ENCODE measurements at regions of chr9 and their contacts with region 1.

Region 1: DNA sequence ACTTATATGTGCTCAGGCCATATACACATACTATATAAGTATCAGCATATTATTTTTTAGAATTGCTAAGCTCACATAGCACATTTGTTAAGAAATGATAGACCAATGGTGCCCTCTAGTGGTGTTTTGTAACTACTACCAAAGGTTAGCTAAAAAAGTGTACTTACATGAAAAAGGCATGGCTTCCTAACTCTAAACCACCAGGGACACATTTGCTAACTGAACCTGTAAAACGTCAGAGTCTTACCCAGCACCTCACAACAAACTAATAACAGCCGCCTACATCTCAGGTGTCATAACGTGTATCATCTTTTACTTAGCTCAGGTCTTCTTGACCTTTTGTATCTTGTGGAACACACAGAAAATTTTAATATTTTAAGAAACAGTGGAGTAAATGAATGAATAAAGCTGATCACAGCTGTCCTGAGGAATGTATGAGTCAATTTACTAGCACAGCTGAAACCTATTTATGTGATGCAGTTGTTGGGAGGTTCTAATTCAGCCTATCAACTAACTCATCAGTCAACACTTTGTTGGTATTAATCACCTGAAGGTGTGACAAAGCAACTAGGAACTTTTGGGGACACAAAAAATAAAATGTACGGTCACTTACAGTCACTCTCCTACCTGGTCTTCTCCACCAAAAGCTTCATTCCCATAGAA is 72.9 kb downstream of the BAAT start:
- DNase-seq: no peak
- H3K4me3 ChIP-seq: no peak overlapping the region
- H3K27ac ChIP-seq: peak overlapping the region in 30 of 59 donors; percentile 0 to 75 (median 40)
- H3K27me3 ChIP-seq: no peaks in the 10 kb centered on the region
- CTCF ChIP-seq: peak; percentile 70 to 97 (median 84)

Region 2: GRCh38 chr9:100714372-100715099 is 597.4 kb before region 1 on chr9:
- intact Hi-C with region 1: loop called (anchors 5 kb)
- DNase-seq: peak; percentile 58 to 86 (median 80)
- H3K4me3 ChIP-seq: peak overlapping the region; percentile 13 to 76 (median 53)
- H3K27ac ChIP-seq: peak overlapping the region in 14 of 59 donors; percentile 1 to 63 (median 27)
- H3K27me3 ChIP-seq: peaks cover 0 to 5% (median 0%) of the 10 kb centered on the region in 45 donors
- CTCF ChIP-seq: peak; percentile 79 to 99 (median 95)

Region 3: GRCh38 chr9:101028346-101029314 is 283.3 kb before region 1 on chr9 and contains the start of gene PLPPR1:
- intact Hi-C with region 1: loop called (anchors 10 kb)
- DNase-seq: peak; percentile 72 to 89 (median 84)
- H3K4me3 ChIP-seq: peak within 1 kb of the TSS; percentile 54 to 91 (median 77)
- H3K27ac ChIP-seq: peak within 1 kb of the TSS in 58 of 59 donors; percentile 48 to 94 (median 85)
- H3K27me3 ChIP-seq: peaks cover 0 to 19% (median 0%) of the 10 kb centered on the region in 45 donors
- CTCF ChIP-seq: peak in 13 of 56 donors; percentile 4 to 24 (median 17)
- total RNA-seq, gene PLPPR1: 3.8 to 68.1 (median 17.9) TPM

Region 4: DNA sequence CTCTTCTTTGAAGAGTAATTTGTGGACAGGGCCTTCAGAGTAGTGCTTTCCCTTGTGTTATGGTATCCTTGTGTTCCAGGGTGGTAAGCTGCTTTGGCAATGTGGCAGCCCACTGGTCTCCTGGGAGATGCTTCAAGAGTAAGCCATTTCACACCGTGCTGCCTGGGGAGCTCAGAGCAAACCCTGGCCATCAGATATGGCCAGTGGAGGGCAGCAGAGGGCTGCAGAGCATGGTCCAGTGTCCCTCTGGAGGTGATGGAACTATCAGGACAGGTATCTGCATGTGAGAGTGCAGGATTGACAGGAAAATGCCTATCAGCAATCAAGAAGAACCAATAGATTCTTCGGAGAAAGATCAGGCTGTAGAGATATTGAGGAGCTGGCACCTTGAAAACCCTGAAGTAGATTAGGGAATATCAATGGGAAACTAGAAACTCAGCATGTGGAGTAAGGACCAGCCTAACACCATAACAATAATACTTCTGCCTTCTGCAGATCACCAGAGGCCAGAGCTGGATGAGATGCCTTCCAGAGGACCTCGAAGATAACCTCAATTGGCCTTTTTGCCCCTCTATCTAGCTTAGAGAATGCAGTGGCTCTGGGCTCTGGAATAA is 192.6 kb before region 1 on chr9:
- intact Hi-C with region 1: loop called (anchors 5 kb)
- DNase-seq: peak; percentile 43 to 83 (median 70)
- H3K4me3 ChIP-seq: no peak overlapping the region
- H3K27ac ChIP-seq: peak overlapping the region in 35 of 59 donors; percentile 6 to 77 (median 33)
- H3K27me3 ChIP-seq: no peaks in the 10 kb centered on the region
- CTCF ChIP-seq: peak; percentile 59 to 96 (median 86)

Region 5: GRCh38 chr9:101235105-101235866 is 76.6 kb before region 1 on chr9:
- intact Hi-C with region 1: loop called (anchors 2 to 5 kb)
- DNase-seq: no peak
- H3K4me3 ChIP-seq: peak overlapping the region in 31 of 59 donors; percentile 3 to 47 (median 17)
- H3K27ac ChIP-seq: peak overlapping the region in 58 of 59 donors; percentile 13 to 91 (median 81)
- H3K27me3 ChIP-seq: no peaks in the 10 kb centered on the region
- CTCF ChIP-seq: peak; percentile 59 to 94 (median 81)

Region 6: DNA sequence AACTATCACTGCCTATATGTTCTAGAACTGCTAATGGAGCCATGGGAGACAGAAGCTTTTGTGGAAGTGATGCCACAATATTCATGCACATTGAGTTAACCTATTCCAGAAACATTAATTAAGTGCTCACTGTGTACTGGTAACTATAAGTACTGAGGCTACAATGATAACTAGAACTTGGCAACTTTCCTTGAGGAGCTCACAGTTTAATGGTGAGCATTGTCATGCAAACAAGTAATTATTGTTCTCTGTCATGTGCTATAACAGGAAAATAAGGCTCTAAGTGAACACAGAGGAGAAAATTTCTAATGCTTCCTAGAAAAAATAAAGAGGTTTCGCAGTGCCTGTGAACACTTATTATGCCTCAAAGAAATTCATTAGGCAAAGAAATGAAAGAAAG is 69.2 kb before region 1 on chr9:
- intact Hi-C with region 1: loop called (anchors 2 to 5 kb)
- DNase-seq: no peak
- H3K4me3 ChIP-seq: peak overlapping the region in 4 of 59 donors; percentile 7 to 21 (median 14)
- H3K27ac ChIP-seq: peak overlapping the region; percentile 50 to 95 (median 88)
- H3K27me3 ChIP-seq: no peaks in the 10 kb centered on the region
- CTCF ChIP-seq: peak in 2 of 56 donors; percentile 15 to 23

Region 7: GRCh38 chr9:101269591-101270283 is 42.2 kb before region 1 on chr9:
- intact Hi-C with region 1: loop called in 1 of 2 experiments (anchors 5 kb)
- DNase-seq: peak in 5 of 10 donors; percentile 17 to 56 (median 50)
- H3K4me3 ChIP-seq: peak overlapping the region; percentile 5 to 73 (median 50)
- H3K27ac ChIP-seq: peak overlapping the region; percentile 15 to 92 (median 79)
- H3K27me3 ChIP-seq: peaks cover 0 to 3% (median 0%) of the 10 kb centered on the region in 45 donors
- CTCF ChIP-seq: no peak

Region 8: GRCh38 chr9:101601904-101602765 is 290.2 kb after region 1 on chr9:
- intact Hi-C with region 1: no loop called
- DNase-seq: peak in 2 of 10 donors; percentile 23 to 26
- H3K4me3 ChIP-seq: peak overlapping the region in 45 of 59 donors; percentile 7 to 58 (median 30)
- H3K27ac ChIP-seq: no peak overlapping the region
- H3K27me3 ChIP-seq: peaks cover 0 to 8% (median 0%) of the 10 kb centered on the region in 45 donors
- CTCF ChIP-seq: peak in 55 of 56 donors; percentile 56 to 85 (median 74)